ENCODE measurements at regions of chr6 and their contacts with region 1.

Region 1: DNA sequence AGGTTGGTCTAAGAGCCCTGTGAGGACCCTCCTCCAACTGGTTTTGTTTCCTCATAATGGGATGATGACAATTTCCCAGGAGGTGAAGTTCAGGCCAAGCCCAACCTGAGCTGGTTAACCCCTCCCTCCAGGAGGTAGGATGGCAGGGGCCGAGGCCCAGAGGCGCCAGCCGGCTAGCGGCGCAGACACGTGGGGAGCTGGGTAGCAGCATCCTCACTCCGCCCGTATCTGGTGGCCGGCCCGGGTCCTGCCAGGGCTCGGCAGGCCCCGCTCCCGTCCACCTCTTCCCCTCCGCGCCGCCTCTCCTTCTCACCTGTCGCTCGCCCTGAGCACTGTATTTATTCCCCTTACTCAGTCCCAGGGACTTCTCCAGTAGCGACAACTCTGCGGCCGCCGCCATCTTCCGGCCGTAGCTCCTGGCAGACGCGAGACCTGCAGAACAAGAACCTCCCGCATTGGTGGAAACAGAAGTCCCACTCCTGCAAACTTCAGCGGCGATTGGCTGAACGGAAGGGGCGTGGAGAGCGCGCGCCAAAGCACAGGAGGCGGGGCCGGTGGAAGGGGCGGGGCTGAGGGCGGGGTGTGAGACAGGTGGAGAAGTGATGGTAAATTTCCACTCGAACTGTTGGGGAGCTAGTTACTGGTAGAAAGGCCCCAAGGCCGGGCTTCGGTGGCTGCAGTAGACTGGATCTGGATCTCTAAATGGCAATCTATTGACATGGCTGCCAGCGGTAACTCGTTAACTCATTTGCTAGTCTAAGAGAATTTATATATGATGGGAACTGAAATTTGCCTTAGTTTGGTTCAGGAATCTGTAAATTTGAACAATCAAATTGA is at the start of gene EEF1E1:
- DNase-seq: peak; percentile 92 to 99 (median 97)

Region 2: GRCh38 chr6:7550433-7550801 is 551.9 kb before region 1 on chr6:
- intact Hi-C with region 1: no loop called
- DNase-seq: no peak

Region 3: GRCh38 chr6:8435160-8435852 is 333.0 kb after region 1 on chr6 and contains the start of gene SLC35B3:
- intact Hi-C with region 1: loop called (anchors 10 kb)
- DNase-seq: peak; percentile 81 to 98 (median 94)

Measured in head of caudate nucleus (tissue), 42 donors.